Mammary epithelial cell (primary cell): ENCODE measurements at regions of chr10 and their contacts with region 1.

Region 1: DNA sequence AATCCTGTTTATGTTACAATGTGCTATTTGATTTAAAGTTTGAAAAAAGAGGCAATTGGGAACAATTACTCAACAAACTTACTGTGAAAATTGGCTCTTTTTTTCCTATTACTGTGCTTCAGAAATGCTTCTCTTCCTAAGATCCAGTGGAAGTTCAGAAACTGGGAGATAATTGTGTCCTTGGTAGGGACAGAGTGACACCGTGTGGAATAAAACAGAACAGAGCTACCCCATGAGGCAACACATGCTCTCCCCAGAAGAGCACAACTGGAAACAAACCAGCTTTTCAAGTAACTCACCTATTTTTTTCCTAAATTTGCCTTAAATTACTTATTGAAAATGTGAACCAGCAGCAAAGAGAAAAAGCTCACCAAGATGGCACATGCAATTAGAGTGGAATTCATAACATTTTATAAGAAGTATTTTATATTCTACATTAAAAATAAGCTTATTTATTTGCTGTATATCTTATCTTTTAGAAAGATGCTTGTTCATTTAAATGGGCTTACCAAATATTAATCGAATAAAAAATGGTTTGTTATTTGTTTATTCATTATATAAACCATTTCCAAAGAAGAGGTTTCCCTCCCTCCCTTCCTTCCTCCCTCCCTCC is 346.1 kb upstream of the ANKRD30A start:
- DNase-seq: peak; percentile 57
- H3K4me3 ChIP-seq: no peak overlapping the region
- H3K27ac ChIP-seq: no peak overlapping the region
- H3K4me1 ChIP-seq: no peaks in the 10 kb centered on the region
- H3K27me3 ChIP-seq: no peaks in the 10 kb centered on the region
- CTCF ChIP-seq: peak; percentile 71 to 76

Region 2: DNA sequence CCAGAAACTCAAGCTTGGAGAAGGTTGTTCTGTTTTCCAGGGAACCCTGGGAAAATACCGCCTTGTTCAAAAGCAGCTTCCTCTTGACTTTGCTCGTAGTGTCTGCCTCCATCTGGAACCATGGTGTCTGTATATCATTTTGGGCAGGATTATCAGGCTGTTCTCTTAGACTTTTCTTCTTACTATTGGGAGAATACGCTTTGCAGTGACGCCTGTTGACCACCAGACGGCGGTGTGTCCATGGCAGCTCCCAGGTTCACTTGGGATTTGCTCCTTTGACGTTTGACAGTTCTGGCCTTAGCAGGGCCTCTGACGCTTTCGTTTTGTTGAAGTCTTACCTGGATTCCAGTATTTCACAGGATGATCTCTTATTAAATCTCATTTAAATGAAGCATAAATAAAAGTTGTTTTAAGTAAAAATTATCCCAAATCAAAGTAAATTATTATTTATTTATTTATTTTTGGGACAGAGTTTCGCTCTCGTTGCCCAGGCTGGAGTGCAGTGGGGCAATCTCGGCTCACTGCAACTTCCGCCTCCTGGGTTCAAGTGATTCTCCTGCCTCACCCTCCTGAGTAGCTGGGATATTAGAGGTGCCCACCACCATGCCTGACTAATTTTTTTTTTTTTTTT is 1216.0 kb before region 1 on chr10:
- CTCF ChIA-PET with region 1: interaction called, 6 read pairs
- dilution Hi-C with region 1: no loop called
- in situ Hi-C with region 1: no loop called
- intact Hi-C with region 1: loop called (anchors 1 kb)
- DNase-seq: peak; percentile 45
- H3K4me3 ChIP-seq: no peak overlapping the region
- H3K27ac ChIP-seq: no peak overlapping the region
- H3K4me1 ChIP-seq: no peaks in the 10 kb centered on the region
- H3K27me3 ChIP-seq: no peaks in the 10 kb centered on the region
- CTCF ChIP-seq: peak; percentile 99 to 100

Region 3: DNA sequence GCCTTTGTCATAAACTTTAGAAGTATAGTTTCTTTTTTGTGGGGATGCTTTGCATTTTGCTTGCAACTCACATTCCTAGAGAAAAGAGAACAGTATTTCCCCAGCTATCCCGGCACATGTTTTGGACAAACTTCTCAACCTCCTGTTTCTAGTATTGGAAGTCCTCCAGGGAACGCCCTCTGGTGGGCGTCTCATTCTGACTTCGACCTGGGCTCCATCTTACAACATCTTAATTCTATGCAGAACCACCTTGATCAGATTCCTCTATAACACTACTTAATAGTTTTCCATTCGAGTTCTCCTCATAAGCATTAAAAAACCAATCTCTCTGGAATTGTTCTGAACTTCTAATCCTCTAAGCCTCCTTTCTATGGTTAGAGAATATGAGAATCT is 997.7 kb before region 1 on chr10:
- CTCF ChIA-PET with region 1: interaction called, 5 read pairs
- dilution Hi-C with region 1: no loop called
- in situ Hi-C with region 1: no loop called
- intact Hi-C with region 1: loop called (anchors 10 kb)
- DNase-seq: no peak
- H3K4me3 ChIP-seq: no peak overlapping the region
- H3K27ac ChIP-seq: no peak overlapping the region
- H3K4me1 ChIP-seq: peaks cover 27% of the 10 kb centered on the region
- H3K27me3 ChIP-seq: no peaks in the 10 kb centered on the region
- CTCF ChIP-seq: peak in 1 of 2 donors; percentile 1

Region 4: DNA sequence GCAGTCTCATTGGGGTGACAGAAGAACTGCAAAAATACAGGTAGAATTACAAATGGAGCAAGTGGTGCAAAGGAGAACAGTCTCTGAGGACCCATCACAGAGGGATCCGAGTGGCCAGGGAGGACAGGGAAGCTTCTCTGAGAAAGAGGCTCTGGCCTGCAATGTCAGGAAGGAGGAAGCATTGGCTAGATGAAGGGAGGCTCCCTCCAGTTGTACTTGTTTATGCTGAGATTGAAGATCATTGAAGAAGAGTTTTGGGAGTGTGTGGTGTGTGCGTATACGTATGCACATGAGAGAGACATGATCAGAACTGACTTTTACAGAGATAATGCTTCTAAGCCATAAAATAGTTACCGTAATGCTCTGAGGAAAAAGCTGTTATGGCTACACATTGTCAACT is 862.5 kb before region 1 on chr10:
- CTCF ChIA-PET with region 1: no interaction called
- dilution Hi-C with region 1: no loop called
- in situ Hi-C with region 1: no loop called
- intact Hi-C with region 1: loop called (anchors 10 kb)
- DNase-seq: no peak
- H3K4me3 ChIP-seq: no peak overlapping the region
- H3K27ac ChIP-seq: no peak overlapping the region
- H3K4me1 ChIP-seq: peaks cover 19% of the 10 kb centered on the region
- H3K27me3 ChIP-seq: no peaks in the 10 kb centered on the region
- CTCF ChIP-seq: peak; percentile 7 to 52

Region 5: GRCh38 chr10:35998026-35998425 is 781.3 kb before region 1 on chr10:
- CTCF ChIA-PET with region 1: interaction called, 3 read pairs
- dilution Hi-C with region 1: no loop called
- in situ Hi-C with region 1: no loop called
- intact Hi-C with region 1: loop called (anchors 1 kb)
- DNase-seq: no peak
- H3K4me3 ChIP-seq: no peak overlapping the region
- H3K27ac ChIP-seq: no peak overlapping the region
- H3K4me1 ChIP-seq: no peaks in the 10 kb centered on the region
- H3K27me3 ChIP-seq: peaks cover 3% of the 10 kb centered on the region
- CTCF ChIP-seq: no peak

Region 6: GRCh38 chr10:36880898-36881297 is 101.6 kb after region 1 on chr10:
- CTCF ChIA-PET with region 1: no interaction called
- dilution Hi-C with region 1: no loop called
- in situ Hi-C with region 1: no loop called
- intact Hi-C with region 1: loop called (anchors 2 kb)
- DNase-seq: peak; percentile 15
- H3K4me3 ChIP-seq: no peak overlapping the region
- H3K27ac ChIP-seq: no peak overlapping the region
- H3K4me1 ChIP-seq: no peaks in the 10 kb centered on the region
- H3K27me3 ChIP-seq: no peaks in the 10 kb centered on the region
- CTCF ChIP-seq: peak; percentile 50 to 69